RWPE1 (cell line): ENCODE measurements at regions of chr13 and their contacts with region 1.

Region 1: DNA sequence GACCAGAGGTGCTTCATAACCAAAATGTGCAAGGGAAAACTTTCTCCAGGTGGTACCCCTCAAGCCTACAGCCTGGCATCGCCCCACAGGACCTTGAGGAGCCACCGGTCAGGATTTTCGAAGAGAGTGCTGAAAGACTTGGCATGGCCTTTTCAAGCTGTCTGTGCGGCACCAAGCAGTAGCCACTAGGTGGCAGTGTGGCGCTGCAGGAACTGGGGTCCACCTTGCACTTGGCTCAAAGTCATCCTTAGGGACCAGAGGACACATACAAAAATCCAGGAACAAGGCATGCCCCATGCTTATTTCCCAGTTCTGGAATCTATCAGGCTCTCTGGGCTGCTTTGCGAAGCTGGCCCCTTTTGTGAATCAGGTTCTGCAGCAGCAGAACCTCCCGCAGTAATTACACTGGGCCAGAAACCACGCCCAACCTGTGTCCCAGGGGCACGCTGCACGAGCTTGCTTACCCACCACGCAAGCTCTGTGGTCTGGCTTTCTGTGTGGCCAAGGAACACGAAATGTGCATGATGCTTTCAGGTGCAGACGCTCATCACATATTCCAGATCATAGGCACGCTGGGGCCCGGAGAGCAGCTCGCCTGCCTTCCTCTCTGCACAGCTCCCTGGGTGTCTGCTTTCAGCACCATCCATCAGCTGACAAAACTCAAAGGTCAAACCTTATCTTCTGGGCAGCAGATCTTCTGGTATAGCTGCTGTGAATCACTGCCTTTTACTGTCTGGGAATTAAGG is 87.2 kb downstream of the SLC7A1 start:
- DNase-seq: peak; percentile 79
- H3K27ac ChIP-seq: peak overlapping the region; percentile 47
- CTCF ChIP-seq: peak; percentile 94

Region 2: DNA sequence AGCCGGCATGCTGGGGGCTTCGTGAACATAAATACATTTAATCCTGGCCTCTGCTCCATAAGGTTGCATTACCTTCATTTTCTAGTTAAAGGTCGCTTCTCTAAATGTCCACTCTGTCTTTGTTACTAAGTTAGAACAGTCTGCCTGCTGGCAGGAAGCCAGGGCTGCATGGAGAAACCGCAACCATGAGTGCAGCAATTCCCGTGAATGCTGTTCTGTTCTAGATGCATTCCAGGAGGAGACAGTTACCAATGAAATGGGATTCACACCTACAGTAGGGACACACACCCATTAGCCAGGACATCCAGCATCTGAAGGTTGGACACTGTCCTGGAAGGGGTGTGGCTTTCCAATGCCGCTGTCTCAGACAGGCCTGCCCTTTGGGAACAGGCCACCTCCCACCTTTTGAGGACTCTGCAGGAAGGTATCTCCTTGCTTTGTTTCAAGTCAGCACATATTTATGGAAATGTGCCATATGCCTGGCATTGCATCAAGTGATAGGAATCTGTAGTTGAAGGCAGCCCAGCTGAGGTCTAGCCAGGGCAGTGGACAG is 42.5 kb before region 1 on chr13:
- CTCF ChIA-PET with region 1: no interaction called
- POLR2A ChIA-PET with region 1: no interaction called
- DNase-seq: peak; percentile 25
- H3K27ac ChIP-seq: peak overlapping the region; percentile 49
- CTCF ChIP-seq: no peak

Region 3: GRCh38 chr13:29496240-29496712 is 12.0 kb before region 1 on chr13:
- CTCF ChIA-PET with region 1: interaction called, 23 read pairs
- POLR2A ChIA-PET with region 1: no interaction called
- DNase-seq: peak; percentile 50
- H3K27ac ChIP-seq: no peak overlapping the region
- CTCF ChIP-seq: no peak

Region 4: GRCh38 chr13:29707876-29708543 is 199.7 kb after region 1 on chr13:
- CTCF ChIA-PET with region 1: interaction called, 10 read pairs
- POLR2A ChIA-PET with region 1: no interaction called
- DNase-seq: peak; percentile 58
- H3K27ac ChIP-seq: no peak overlapping the region
- CTCF ChIP-seq: peak; percentile 35; the same call in 1 of the 2 replicates